Endothelial cell of umbilical vein (primary cell): ENCODE measurements at regions of chr4 and their contacts with region 1.

Region 1: DNA sequence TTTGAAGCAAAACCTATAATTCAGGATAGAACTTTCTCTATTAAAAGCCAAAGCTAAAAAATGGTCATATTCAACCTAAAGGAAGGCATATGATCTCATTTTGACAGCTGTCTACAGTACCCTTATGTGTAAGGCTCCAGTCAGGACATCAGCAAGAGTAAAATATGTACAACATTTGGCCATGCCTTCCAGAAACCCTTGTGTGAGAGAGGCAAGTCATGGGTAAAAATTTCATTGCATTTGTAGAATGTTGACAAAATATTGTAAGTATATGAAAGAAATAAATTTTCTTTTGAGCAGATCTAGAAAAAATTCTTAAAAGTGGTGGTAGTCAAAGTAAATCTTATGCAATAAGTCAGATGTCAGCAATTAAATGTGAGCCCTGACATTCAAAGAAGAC is 132.3 kb downstream of the SLC39A8 start:
- DNase-seq: no peak
- H3K4me3 ChIP-seq: no peak overlapping the region
- H3K27ac ChIP-seq: no peak overlapping the region
- H3K4me1 ChIP-seq: peaks cover 2% of the 10 kb centered on the region
- H3K27me3 ChIP-seq: no peaks in the 10 kb centered on the region
- CTCF ChIP-seq: no peak
- POLR2A ChIP-seq: no peak

Region 2: DNA sequence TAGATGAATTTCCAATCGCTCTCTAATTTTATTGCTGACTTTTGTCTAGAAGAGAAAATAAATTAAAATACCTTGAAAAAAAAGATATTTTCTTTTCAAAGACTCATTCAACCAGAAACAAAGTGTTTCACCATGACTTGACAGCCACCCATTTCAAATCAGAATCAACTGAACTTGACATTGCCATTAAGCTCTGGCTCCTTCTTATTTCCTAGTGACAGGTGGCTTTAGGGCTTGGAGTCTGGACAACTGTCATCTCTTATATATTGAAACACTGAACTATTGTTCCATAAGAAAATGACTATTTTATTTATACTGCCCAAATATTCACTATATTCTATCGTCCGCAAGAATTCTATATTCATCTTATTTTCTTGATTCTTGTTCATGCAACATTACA is 96.9 kb before region 1 on chr4:
- CTCF ChIA-PET with region 1: no interaction called
- POLR2A ChIA-PET with region 1: no interaction called
- dilution Hi-C with region 1: no loop called
- intact Hi-C with region 1: loop called (anchors 5 kb)
- DNase-seq: no peak
- H3K4me3 ChIP-seq: no peak overlapping the region
- H3K27ac ChIP-seq: no peak overlapping the region
- H3K4me1 ChIP-seq: no peaks in the 10 kb centered on the region
- H3K27me3 ChIP-seq: no peaks in the 10 kb centered on the region
- CTCF ChIP-seq: no peak
- POLR2A ChIP-seq: no peak